A673 (cell line): ENCODE measurements at regions of chr7 and their contacts with region 1.

Region 1: DNA sequence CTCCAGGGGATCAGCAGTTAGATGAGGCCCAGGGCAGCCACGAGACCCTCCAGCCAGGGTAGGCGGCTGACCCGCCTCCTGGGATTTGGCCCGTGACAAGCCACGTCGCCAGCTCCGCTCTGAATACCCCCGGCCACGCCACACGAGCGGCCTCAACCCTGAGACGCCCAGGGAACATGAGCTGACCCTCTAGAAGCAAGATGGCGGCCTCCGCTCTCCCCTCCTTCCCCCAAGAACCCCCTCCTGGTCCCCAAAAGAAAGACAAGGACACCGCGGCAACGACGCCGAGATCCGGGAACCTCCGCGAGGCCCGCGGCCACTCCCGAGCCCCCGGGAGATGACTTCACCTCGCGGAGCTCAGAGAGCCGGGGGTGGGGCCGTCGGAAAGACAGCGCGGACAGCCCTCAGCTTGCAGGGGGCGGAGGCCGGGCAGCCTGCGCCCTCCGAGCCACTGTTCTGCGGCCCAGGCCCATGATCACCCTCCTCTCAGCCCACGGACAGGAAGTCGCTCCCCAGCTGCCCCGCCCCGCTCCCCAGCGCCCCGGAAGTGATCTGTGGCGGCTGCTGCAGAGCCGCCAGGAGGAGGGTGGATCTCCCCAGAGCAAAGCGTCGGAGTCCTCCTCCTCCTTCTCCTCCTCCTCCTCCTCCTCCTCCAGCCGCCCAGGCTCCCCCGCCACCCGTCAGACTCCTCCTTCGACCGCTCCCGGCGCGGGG is at the start of gene RALA:
- DNase-seq: peak; percentile 95
- H3K4me3 ChIP-seq: peak within 1 kb of the TSS; percentile 94
- H3K27ac ChIP-seq: peak within 1 kb of the TSS; percentile 98
- H3K4me1 ChIP-seq: peaks cover 22% of the 10 kb centered on the region
- H3K27me3 ChIP-seq: no peaks in the 10 kb centered on the region
- CTCF ChIP-seq: no peak
- total RNA-seq, gene RALA: 33.9 and 36.3 TPM in 2 replicates

Region 2: GRCh38 chr7:39609113-39609934 is 13.9 kb before region 1 on chr7:
- CTCF ChIA-PET with region 1: no interaction called
- POLR2A ChIA-PET with region 1: no interaction called
- intact Hi-C with region 1: loop called (anchors 1 kb)
- DNase-seq: peak; percentile 40
- H3K4me3 ChIP-seq: no peak overlapping the region
- H3K27ac ChIP-seq: peak overlapping the region; percentile 30
- H3K4me1 ChIP-seq: peaks cover 21% of the 10 kb centered on the region
- H3K27me3 ChIP-seq: no peaks in the 10 kb centered on the region
- CTCF ChIP-seq: no peak

Region 3: GRCh38 chr7:39633563-39634477 is 10.6 kb after region 1 on chr7:
- CTCF ChIA-PET with region 1: no interaction called
- POLR2A ChIA-PET with region 1: no interaction called
- intact Hi-C with region 1: loop called (anchors 1 kb)
- DNase-seq: no peak
- H3K4me3 ChIP-seq: no peak overlapping the region
- H3K27ac ChIP-seq: no peak overlapping the region
- H3K4me1 ChIP-seq: no peaks in the 10 kb centered on the region
- H3K27me3 ChIP-seq: no peaks in the 10 kb centered on the region
- CTCF ChIP-seq: no peak